ENCODE measurements at regions of chr9 and their contacts with region 1.

Region 1: DNA sequence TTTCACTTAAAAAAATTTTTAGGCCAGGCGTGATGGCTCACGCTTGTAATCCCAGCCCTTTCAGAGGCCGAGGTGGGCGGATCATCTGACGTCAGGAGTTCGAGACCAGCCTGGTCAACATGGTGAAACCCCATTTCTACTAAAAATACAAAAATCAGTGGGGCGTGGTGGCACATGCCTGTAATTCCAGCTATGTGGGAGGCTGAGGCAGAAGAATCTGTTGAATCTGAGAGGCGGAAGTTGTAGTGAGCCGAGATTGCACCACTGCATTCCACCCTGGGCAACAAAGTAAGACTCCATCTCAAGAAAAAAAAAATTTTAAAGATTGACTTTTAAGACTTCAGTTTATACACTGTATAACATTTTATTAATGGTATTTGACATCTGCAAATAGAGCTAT is 60.1 kb upstream of the GNAQ start:
- DNase-seq: no peak
- ATAC-seq: no peak
- H3K4me3 ChIP-seq: no peak overlapping the region
- H3K27ac ChIP-seq: no peak overlapping the region
- H3K4me1 ChIP-seq: no peaks in the 10 kb centered on the region
- H3K27me3 ChIP-seq: no peaks in the 10 kb centered on the region
- CTCF ChIP-seq: no peak
- EP300 ChIP-seq: no peak
- POLR2A ChIP-seq: no peak
- RAD21 ChIP-seq: no peak

Region 2: DNA sequence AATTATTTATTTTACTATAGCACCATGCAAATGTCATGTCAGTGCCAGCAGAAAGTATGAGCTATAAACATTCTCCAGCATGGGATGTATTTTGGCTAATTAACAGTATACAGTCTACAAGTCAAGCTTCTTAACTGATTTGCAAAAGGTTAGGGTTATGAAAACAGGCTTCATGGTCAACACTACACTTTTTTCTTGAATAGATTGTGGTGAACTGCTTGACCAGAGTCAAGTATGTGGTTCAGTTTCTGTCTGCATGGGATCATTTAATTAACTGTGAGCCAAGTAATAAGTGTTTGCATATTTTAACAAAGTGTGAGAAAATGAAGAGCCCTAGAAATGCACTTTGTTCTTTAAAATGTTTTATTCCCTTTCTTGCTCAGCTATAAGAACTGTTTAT is 45.6 kb before region 1 on chr9:
- CTCF ChIA-PET with region 1: no interaction called
- POLR2A ChIA-PET with region 1: no interaction called
- RAD21 ChIA-PET with region 1: no interaction called
- SMC1A ChIA-PET with region 1: no interaction called
- in situ Hi-C with region 1: no loop called
- intact Hi-C with region 1: loop called (anchors 5 kb)
- DNase-seq: no peak
- ATAC-seq: peak; percentile 52
- H3K4me3 ChIP-seq: no peak overlapping the region
- H3K27ac ChIP-seq: no peak overlapping the region
- H3K4me1 ChIP-seq: no peaks in the 10 kb centered on the region
- H3K27me3 ChIP-seq: no peaks in the 10 kb centered on the region; a peak in 1 of 4 replicates
- CTCF ChIP-seq: no peak
- EP300 ChIP-seq: no peak
- POLR2A ChIP-seq: no peak
- RAD21 ChIP-seq: no peak

Region 3: GRCh38 chr9:78064075-78064474 is 27.6 kb before region 1 on chr9:
- CTCF ChIA-PET with region 1: no interaction called
- POLR2A ChIA-PET with region 1: no interaction called
- RAD21 ChIA-PET with region 1: no interaction called
- SMC1A ChIA-PET with region 1: no interaction called
- in situ Hi-C with region 1: no loop called
- intact Hi-C with region 1: no loop called
- DNase-seq: no peak
- ATAC-seq: no peak
- H3K4me3 ChIP-seq: no peak overlapping the region
- H3K27ac ChIP-seq: no peak overlapping the region
- H3K4me1 ChIP-seq: no peaks in the 10 kb centered on the region
- H3K27me3 ChIP-seq: no peaks in the 10 kb centered on the region
- CTCF ChIP-seq: no peak
- EP300 ChIP-seq: no peak
- POLR2A ChIP-seq: no peak
- RAD21 ChIP-seq: no peak

Measured in GM12878 (cell line).